ENCODE measurements at regions of chr9 and their contacts with region 1.

Region 1: DNA sequence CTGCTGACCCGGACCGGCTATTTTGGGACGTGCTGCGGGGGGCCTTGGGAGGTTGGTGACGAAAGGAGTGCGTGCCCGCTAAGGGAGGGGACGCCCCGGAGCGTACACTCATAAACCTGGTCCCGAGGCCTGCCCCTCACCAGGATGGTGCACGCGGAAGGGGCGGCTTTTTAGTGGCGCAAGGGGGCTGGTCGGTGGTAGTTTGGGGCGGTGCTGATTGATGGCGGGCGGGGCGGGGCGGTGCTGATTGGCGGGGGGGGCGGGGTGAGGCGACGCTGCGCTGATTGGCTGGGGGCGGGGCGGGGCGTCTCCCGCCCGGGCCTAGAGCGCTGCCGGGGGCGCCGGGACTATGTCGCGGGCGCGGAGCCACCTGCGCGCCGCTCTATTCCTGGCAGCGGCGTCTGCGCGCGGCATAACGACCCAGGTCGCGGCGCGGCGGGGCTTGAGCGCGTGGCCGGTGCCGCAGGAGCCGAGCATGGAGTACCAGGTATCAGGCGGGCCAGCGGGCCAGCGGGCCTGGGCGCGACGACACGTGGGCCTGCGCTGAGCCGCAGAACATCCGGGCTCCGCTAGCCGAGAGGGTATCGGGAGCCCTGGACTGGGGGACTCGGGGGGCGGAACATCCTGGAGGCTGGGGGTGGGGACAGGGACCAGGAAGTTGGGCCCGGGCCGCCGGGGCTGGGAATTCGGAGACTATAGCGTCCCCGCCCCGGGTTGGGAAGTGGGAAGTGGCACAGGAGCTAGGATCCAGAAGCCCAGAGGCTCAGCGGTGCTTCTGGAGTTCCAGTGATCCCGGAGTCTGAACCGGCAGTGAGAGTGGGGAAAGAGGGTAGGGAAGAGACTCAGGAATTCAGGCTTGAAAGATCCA is at the start of gene FPGS:
- DNase-seq: peak; percentile 70 to 95
- H3K4me3 ChIP-seq: peak within 1 kb of the TSS; percentile 73 to 83
- H3K27ac ChIP-seq: peak within 1 kb of the TSS; percentile 92 to 99
- H3K4me1 ChIP-seq: peaks cover 21 to 31% of the 10 kb centered on the region in 2 donors
- H3K27me3 ChIP-seq: no peaks in the 10 kb centered on the region
- CTCF ChIP-seq: no peak
- total RNA-seq, gene FPGS: 286 TPM

Region 2: GRCh38 chr9:127754099-127755050 is 48.4 kb before region 1 on chr9:
- intact Hi-C with region 1: no loop called
- DNase-seq: no peak
- H3K4me3 ChIP-seq: peak overlapping the region in 1 of 2 donors; percentile 33
- H3K27ac ChIP-seq: no peak overlapping the region
- H3K4me1 ChIP-seq: peaks cover 0 to 4% of the 10 kb centered on the region in 2 donors
- H3K27me3 ChIP-seq: peaks cover 6% of the 10 kb centered on the region
- CTCF ChIP-seq: no peak

Region 3: DNA sequence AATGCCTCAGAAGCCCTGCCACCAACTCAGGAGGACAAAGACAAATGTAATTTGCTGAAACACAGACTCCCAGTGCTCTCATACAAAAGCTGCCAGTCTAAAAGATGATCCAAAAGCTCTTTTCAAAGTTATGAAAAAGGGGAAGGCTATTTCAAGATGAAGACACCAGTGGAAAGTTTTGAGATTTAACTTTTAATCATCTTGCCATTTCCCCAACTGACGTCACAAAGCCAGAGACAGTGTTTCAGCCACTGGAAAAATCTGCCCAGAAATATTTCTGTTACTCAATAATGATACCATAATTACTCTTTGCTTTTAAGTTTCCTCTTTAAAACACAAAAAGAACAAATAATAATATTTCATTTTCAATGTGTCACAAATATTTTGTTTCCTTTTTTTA is 30.7 kb after region 1 on chr9:
- intact Hi-C with region 1: loop called (anchors 2 kb)
- DNase-seq: no peak
- H3K4me3 ChIP-seq: no peak overlapping the region
- H3K27ac ChIP-seq: peak overlapping the region; percentile 95 to 97
- H3K4me1 ChIP-seq: peaks cover 49 to 87% of the 10 kb centered on the region in 2 donors
- H3K27me3 ChIP-seq: no peaks in the 10 kb centered on the region
- CTCF ChIP-seq: no peak

Region 4: GRCh38 chr9:127869310-127870152 is 66.7 kb after region 1 on chr9:
- intact Hi-C with region 1: loop called (anchors 5 kb)
- DNase-seq: peak; percentile 55 to 93
- H3K4me3 ChIP-seq: no peak overlapping the region
- H3K27ac ChIP-seq: peak overlapping the region; percentile 63 to 67
- H3K4me1 ChIP-seq: peaks cover 13% of the 10 kb centered on the region in 2 donors
- H3K27me3 ChIP-seq: no peaks in the 10 kb centered on the region
- CTCF ChIP-seq: peak; percentile 84 to 97 (median 88)